T-cell (primary cell): ENCODE measurements at regions of chr5 and their contacts with region 1.

Region 1: DNA sequence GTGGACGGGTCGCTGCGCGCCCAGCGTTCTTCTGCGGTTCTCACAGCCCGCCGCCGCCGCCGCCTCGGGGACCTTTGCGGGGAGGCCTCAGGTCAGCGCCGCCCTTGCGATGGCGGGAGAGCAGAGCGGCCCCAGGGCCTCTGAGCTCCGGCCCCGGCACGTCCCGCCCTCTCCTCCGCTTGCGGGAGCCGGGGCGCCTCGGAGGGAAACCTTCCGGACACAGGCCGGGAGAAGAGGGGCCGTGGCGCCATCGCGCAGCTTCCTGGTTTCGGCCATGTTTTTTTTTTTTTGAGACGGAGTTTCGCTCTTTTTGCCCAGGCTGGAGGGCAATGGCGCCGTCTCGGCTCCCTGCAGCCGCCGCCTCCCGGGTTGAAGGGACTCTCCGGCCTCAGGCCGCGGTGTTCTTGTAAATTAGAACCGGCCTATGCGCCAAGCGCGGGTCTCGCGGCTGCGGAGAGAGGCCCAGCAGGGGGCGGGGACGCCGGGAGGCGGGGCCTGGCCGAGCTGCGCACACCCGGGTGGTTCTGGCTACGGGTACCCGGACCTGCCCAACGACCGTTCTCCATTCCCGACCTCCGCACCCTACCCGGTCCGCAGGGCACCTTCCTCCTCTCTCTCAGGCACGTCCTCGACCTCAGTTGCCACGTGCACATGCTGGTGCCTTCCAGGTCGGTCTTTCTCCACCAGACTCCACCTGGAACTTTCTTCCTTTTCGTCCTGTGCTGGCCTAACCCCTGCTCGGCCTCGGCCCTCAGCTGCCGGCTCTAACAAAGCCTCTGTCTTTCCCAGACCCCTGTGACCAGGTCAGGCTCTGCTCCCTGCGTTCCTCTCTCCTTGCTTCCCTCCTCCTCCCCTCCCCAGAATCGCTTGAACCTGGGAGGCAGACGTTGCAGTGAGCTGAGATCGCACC is 28.8 kb upstream of the MGAT1 start:
- DNase-seq: peak; percentile 36 to 80 (median 59)
- ATAC-seq: peak; percentile 60 to 77 (median 76)
- H3K4me3 ChIP-seq: peak overlapping the region; percentile 84 to 91
- H3K4me3 Mint-ChIP-seq: peak overlapping the region; percentile 94 to 97 (median 94)
- H3K27ac ChIP-seq: peak overlapping the region; percentile 93
- H3K27ac Mint-ChIP-seq: peak overlapping the region; percentile 99
- H3K4me1 ChIP-seq: peaks cover 15 to 46% of the 10 kb centered on the region in 2 experiments
- H3K4me1 Mint-ChIP-seq: peaks cover 54 to 60% (median 55%) of the 10 kb centered on the region in 3 donors
- H3K27me3 ChIP-seq: no peaks in the 10 kb centered on the region
- H3K27me3 Mint-ChIP-seq: no peaks in the 10 kb centered on the region

Region 2: GRCh38 chr5:180802325-180803180 is 28.8 kb before region 1 on chr5 and contains the start of gene MGAT1:
- CTCF ChIA-PET with region 1: interaction called in 1 of 2 experiments, 15 read pairs
- POLR2A ChIA-PET with region 1: interaction called, 3 to 6 read pairs
- DNase-seq: peak; percentile 18 to 85 (median 60)
- ATAC-seq: peak; percentile 62 to 71 (median 66)
- H3K4me3 ChIP-seq: peak within 1 kb of the TSS; percentile 90 to 94
- H3K4me3 Mint-ChIP-seq: peak within 1 kb of the TSS; percentile 83 to 95 (median 94)
- H3K27ac ChIP-seq: peak within 1 kb of the TSS; percentile 80
- H3K27ac Mint-ChIP-seq: peak within 1 kb of the TSS; percentile 99 to 100
- H3K4me1 ChIP-seq: peaks cover 57 to 86% of the 10 kb centered on the region in 2 experiments
- H3K4me1 Mint-ChIP-seq: peaks cover 81 to 83% (median 83%) of the 10 kb centered on the region in 3 donors
- H3K27me3 ChIP-seq: no peaks in the 10 kb centered on the region
- H3K27me3 Mint-ChIP-seq: no peaks in the 10 kb centered on the region
- total RNA-seq, gene MGAT1: 83.1 to 198 (median 145) TPM

Region 3: DNA sequence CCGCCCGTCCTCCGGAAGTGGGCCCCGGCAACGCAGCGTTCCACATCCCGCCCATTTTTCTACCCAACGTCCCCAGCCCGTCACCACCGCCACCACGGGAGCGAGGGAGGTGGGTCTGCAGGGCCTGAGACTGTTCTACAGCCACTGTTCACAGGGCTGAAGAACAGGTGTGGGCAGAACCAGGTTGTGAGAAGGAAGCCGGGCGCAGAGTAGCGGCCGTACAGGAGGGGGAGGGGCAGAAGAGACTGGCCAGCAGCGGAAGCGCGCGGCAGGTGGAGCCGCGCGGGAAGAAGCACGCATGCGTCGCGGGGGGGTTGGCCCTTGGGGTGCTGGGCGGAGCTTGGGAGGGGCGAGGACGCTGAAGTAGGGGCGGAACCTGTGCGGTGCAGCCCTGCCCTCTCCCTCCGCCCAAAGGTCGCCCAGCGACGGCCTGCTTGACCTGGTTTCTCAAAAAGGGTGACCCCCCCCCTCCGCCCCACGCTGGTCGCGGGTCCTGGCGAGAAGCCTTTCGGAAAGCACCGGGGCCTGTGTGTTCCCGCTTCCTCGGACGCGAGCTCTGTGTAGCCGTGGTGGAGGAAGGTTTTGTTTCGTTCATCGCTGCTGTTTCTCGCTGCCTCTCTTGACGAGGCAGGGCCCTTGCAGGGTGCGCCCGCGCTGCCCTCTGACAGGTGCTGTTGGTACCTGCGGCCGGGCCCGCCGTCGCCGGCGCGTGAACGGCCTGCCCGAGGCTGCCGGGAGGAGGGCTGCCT is 21.0 kb before region 1 on chr5:
- CTCF ChIA-PET with region 1: interaction called, 4 to 13 read pairs
- POLR2A ChIA-PET with region 1: interaction called, 3 to 11 read pairs
- DNase-seq: peak; percentile 90 to 98 (median 94)
- ATAC-seq: peak; percentile 77 to 84 (median 79)
- H3K4me3 ChIP-seq: peak overlapping the region; percentile 78 to 81
- H3K4me3 Mint-ChIP-seq: peak overlapping the region; percentile 83 to 96 (median 95)
- H3K27ac ChIP-seq: peak overlapping the region; percentile 88
- H3K27ac Mint-ChIP-seq: peak overlapping the region; percentile 99 to 100
- H3K4me1 ChIP-seq: peaks cover 44 to 54% of the 10 kb centered on the region in 2 experiments
- H3K4me1 Mint-ChIP-seq: peaks cover 70 to 83% (median 79%) of the 10 kb centered on the region in 3 donors
- H3K27me3 ChIP-seq: no peaks in the 10 kb centered on the region
- H3K27me3 Mint-ChIP-seq: no peaks in the 10 kb centered on the region